Tibial artery (tissue), 4 donors: ENCODE measurements at regions of chr4 and their contacts with region 1.

Region 1: GRCh38 chr4:146381263-146381872 is 140.4 kb downstream of the SLC10A7 start:
- DNase-seq: no peak
- H3K4me3 ChIP-seq: no peak overlapping the region
- H3K27ac ChIP-seq: no peak overlapping the region
- H3K4me1 ChIP-seq: no peaks in the 10 kb centered on the region
- H3K27me3 ChIP-seq: no peaks in the 10 kb centered on the region
- CTCF ChIP-seq: no peak

Region 2: GRCh38 chr4:146202665-146203064 is 178.7 kb before region 1 on chr4:
- intact Hi-C with region 1: no loop called
- DNase-seq: no peak
- H3K4me3 ChIP-seq: no peak overlapping the region
- H3K27ac ChIP-seq: no peak overlapping the region
- H3K4me1 ChIP-seq: no peaks in the 10 kb centered on the region
- H3K27me3 ChIP-seq: no peaks in the 10 kb centered on the region
- CTCF ChIP-seq: no peak

Region 3: DNA sequence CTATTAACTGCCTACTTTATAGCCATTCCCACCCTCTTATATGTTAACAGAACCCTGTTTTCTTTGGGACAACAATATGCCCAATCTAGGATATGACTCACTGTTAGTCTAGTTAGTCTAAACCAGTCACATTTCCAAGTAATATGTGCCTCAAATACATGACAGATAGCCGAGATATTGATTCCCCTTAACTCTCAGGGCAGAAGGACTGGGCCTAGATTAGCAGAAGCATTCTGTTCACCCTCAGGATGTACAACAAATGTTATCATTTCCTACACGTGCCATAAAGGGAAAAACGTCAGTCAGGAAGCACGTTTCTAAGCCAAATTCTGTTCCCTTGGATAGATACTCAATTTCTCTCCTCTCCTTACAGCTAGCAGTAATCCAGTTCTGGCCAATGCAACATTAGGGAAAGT is 26.3 kb after region 1 on chr4:
- intact Hi-C with region 1: loop called (anchors 2 kb)
- DNase-seq: no peak
- H3K4me3 ChIP-seq: no peak overlapping the region
- H3K27ac ChIP-seq: no peak overlapping the region
- H3K4me1 ChIP-seq: no peaks in the 10 kb centered on the region
- H3K27me3 ChIP-seq: no peaks in the 10 kb centered on the region
- CTCF ChIP-seq: no peak

Region 4: DNA sequence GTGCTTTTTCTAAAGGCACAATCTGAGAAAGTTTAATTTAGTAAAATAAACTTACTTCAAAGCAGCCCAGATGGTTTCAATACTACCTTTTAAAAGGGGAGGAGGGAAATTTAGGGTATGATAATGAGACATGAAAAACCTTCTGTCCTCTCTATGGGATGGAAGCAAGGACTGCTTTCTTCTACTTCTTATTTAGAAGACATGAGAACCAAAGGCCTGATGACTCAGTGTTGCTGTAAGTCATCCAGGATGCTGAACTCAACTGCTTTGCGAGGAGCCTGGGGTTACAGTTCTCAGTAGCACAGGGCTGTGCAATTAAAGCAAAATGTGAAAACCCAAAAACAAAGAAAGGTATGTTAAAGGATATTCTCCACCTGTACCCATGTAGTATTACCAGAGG is 958.7 kb after region 1 on chr4:
- intact Hi-C with region 1: no loop called
- DNase-seq: no peak
- H3K4me3 ChIP-seq: no peak overlapping the region
- H3K27ac ChIP-seq: no peak overlapping the region
- H3K4me1 ChIP-seq: peaks cover 0 to 8% (median 0%) of the 10 kb centered on the region in 4 donors
- H3K27me3 ChIP-seq: no peaks in the 10 kb centered on the region
- CTCF ChIP-seq: no peak